PC-9 (cell line): ENCODE measurements at regions of chr12 and their contacts with region 1.

Region 1: GRCh38 chr12:16258934-16259333 is 18.6 kb downstream of the SLC15A5 start:
- DNase-seq: no peak
- H3K4me3 ChIP-seq: no peak overlapping the region
- H3K27ac ChIP-seq: no peak overlapping the region
- H3K4me1 ChIP-seq: no peaks in the 10 kb centered on the region
- H3K27me3 ChIP-seq: no peaks in the 10 kb centered on the region
- CTCF ChIP-seq: no peak

Region 2: GRCh38 chr12:15293731-15294130 is 965.2 kb before region 1 on chr12:
- CTCF ChIA-PET with region 1: no interaction called
- POLR2A ChIA-PET with region 1: no interaction called
- intact Hi-C with region 1: no loop called
- DNase-seq: no peak
- H3K4me3 ChIP-seq: no peak overlapping the region
- H3K27ac ChIP-seq: no peak overlapping the region
- H3K4me1 ChIP-seq: no peaks in the 10 kb centered on the region
- H3K27me3 ChIP-seq: no peaks in the 10 kb centered on the region
- CTCF ChIP-seq: no peak

Region 3: GRCh38 chr12:16307821-16308475 is 49.0 kb after region 1 on chr12:
- CTCF ChIA-PET with region 1: no interaction called
- POLR2A ChIA-PET with region 1: interaction called, 11 read pairs
- intact Hi-C with region 1: no loop called
- DNase-seq: no peak
- H3K4me3 ChIP-seq: no peak overlapping the region
- H3K27ac ChIP-seq: no peak overlapping the region
- H3K4me1 ChIP-seq: no peaks in the 10 kb centered on the region
- H3K27me3 ChIP-seq: no peaks in the 10 kb centered on the region
- CTCF ChIP-seq: no peak